Heart right ventricle (tissue), 16 donors: ENCODE measurements at regions of chr10 and their contacts with region 1.

Region 1: GRCh38 chr10:94076321-94076841 is 82.7 kb downstream of the PLCE1 start:
- DNase-seq: peak in 1 of 2 donors; percentile 15
- ATAC-seq: peak; percentile 65 to 91 (median 80)
- H3K4me3 ChIP-seq: peak overlapping the region in 1 of 10 donors; percentile 25
- H3K27ac ChIP-seq: peak overlapping the region in 5 of 10 donors; percentile 49 to 66 (median 52)
- H3K4me1 ChIP-seq: peaks cover 6 to 26% (median 19%) of the 10 kb centered on the region in 9 donors
- H3K27me3 ChIP-seq: no peaks in the 10 kb centered on the region
- CTCF ChIP-seq: peak in 8 of 9 donors; percentile 32 to 66 (median 50)

Region 2: DNA sequence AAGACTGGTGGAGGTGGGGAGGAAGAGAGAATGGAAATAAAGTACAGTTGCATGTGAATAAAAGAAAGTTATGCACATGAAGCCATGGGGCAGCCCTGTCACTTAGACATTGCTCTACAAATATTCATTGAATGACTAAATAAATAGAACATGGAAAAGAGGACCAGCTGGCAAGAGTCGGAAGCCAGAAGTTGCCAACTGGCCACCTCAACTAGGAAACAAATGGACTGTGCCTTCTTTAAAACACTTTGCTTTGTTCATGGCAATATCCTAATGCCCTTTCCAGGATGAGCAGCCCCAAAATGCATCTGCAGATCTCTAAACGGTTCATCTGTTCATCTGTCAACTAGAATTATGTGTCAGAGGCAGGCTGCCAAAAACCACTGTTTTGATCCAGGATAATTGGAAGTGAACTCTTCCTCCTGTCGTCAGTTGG is 129.0 kb after region 1 on chr10:
- intact Hi-C with region 1: no loop called
- DNase-seq: peak in 1 of 2 donors; percentile 30
- ATAC-seq: no peak
- H3K4me3 ChIP-seq: no peak overlapping the region
- H3K27ac ChIP-seq: no peak overlapping the region
- H3K4me1 ChIP-seq: peaks cover 1 to 35% (median 22%) of the 10 kb centered on the region in 9 donors
- H3K27me3 ChIP-seq: no peaks in the 10 kb centered on the region
- CTCF ChIP-seq: no peak

Region 3: DNA sequence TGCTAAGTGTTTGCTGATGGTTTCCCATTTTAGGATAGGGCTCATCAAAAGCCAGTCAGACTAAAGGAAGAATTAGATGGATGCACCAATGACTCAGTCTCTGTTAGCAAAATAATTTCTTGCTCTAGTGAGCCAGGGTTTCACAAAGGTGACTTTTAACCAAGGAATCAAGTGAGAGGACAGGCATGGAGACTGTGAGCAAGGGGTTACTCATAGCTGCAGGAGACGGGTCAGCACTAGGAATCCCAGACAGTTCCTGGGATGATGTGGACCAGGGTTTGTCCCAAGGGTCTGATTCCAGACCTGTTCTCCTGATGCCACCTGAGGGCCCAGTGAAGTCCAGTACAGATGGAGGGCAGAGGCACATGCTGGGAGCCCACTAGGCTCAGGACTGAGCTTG is 148.3 kb after region 1 on chr10:
- intact Hi-C with region 1: loop called in 1 of 10 experiments (anchors 5 kb)
- DNase-seq: no peak
- ATAC-seq: peak in 1 of 8 donors; percentile 45
- H3K4me3 ChIP-seq: no peak overlapping the region
- H3K27ac ChIP-seq: peak overlapping the region in 5 of 10 donors; percentile 8 to 71 (median 33)
- H3K4me1 ChIP-seq: peaks cover 0 to 50% (median 9%) of the 10 kb centered on the region in 9 donors
- H3K27me3 ChIP-seq: no peaks in the 10 kb centered on the region
- CTCF ChIP-seq: no peak

Region 4: DNA sequence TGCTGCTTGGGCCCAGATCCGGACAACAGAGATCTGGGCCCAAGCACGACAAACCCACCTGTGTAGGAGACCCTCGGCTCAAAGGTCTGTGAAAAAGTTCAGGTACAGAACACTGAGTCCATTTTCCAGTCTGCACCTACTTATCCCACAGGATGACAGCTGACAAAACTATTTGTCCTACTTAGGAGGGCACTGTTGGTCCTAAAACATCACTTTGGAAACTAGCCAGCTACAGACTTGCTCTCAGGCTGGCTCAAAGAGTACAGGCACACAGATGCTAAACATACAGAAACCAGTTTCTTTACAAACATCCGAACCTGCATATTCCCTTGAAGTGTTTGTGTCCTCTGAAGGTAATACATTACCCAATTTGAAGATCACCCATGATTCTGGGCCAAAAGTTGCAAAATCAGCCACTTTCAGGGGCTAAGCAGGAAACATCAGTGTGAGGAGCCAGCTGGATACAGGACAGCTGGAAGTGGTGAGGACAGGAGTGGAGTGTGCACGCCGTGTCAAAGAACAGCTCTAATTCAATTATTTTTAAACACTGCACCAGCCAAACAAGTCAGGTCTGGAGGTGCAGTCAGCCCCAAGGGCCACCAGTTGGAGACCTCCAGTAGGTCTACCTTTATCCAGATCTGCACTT is 197.9 kb after region 1 on chr10:
- intact Hi-C with region 1: loop called in 1 of 10 experiments (anchors 5 kb)
- DNase-seq: peak; percentile 33 to 53
- ATAC-seq: peak; percentile 82 to 96 (median 90)
- H3K4me3 ChIP-seq: no peak overlapping the region
- H3K27ac ChIP-seq: peak overlapping the region; percentile 2 to 86 (median 70)
- H3K4me1 ChIP-seq: peaks cover 9 to 31% (median 23%) of the 10 kb centered on the region in 9 donors
- H3K27me3 ChIP-seq: no peaks in the 10 kb centered on the region
- CTCF ChIP-seq: no peak

Region 5: DNA sequence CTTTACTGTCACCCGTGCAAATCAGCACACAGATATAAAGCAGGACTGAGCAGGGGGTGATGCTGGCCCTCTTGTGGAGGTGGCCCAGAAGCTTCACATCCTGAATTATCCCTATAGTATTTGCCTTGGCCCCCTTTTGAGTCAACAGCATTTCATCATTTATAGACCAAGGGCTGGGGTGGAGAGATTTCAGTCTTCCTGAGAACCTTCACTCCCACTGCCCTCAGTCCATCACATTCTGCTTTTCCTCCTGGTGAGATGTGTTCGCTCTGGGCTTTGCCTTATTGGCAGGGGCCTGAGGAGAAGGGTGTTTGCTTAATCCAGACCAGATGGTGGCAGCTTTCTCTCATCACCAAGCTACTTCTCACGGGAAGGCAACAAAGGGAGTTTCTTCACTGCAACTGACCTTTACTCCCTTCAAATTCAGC is 238.7 kb after region 1 on chr10:
- intact Hi-C with region 1: loop called in 7 of 10 experiments (anchors 2 to 10 kb)
- DNase-seq: no peak
- ATAC-seq: peak in 3 of 8 donors; percentile 12 to 34 (median 20)
- H3K4me3 ChIP-seq: no peak overlapping the region
- H3K27ac ChIP-seq: peak overlapping the region in 4 of 10 donors; percentile 15 to 35 (median 24)
- H3K4me1 ChIP-seq: peaks cover 0 to 24% (median 0%) of the 10 kb centered on the region in 9 donors
- H3K27me3 ChIP-seq: no peaks in the 10 kb centered on the region
- CTCF ChIP-seq: no peak

Region 6: DNA sequence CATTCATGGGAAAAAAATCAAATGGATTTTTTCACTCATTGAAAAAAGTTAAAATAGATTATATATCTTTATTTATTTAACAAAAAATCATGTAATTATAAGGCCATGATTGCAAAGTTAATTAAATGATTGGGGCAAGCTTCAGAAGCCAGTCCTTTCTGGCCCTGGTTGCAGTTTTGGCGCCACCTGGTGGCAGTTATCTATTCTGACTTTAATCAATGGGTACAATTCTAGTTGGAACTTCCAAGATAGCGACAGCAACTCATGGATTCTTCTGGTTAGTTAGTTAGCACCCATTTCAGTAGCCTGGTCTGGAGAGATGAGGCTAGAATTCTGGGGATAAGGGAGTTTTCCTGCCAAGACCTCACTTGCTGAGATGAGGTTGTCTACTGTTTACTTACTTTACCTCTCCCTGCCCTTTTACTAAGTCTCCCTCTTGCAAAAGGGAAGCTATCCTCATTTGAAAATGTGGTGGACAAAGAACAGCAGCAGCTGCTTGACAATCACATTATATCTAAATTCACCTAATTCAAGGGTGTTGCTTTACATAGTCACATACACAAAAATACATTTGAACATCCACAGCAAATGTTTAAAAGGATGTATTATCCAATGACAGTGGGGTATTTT is 244.0 kb after region 1 on chr10:
- intact Hi-C with region 1: loop called in 7 of 10 experiments (anchors 2 to 10 kb)
- DNase-seq: peak; percentile 48 to 69
- ATAC-seq: peak in 3 of 8 donors; percentile 43 to 59 (median 47)
- H3K4me3 ChIP-seq: no peak overlapping the region
- H3K27ac ChIP-seq: no peak overlapping the region
- H3K4me1 ChIP-seq: peaks cover 0 to 17% (median 0%) of the 10 kb centered on the region in 9 donors
- H3K27me3 ChIP-seq: no peaks in the 10 kb centered on the region
- CTCF ChIP-seq: peak; percentile 83 to 93 (median 86)

Region 7: DNA sequence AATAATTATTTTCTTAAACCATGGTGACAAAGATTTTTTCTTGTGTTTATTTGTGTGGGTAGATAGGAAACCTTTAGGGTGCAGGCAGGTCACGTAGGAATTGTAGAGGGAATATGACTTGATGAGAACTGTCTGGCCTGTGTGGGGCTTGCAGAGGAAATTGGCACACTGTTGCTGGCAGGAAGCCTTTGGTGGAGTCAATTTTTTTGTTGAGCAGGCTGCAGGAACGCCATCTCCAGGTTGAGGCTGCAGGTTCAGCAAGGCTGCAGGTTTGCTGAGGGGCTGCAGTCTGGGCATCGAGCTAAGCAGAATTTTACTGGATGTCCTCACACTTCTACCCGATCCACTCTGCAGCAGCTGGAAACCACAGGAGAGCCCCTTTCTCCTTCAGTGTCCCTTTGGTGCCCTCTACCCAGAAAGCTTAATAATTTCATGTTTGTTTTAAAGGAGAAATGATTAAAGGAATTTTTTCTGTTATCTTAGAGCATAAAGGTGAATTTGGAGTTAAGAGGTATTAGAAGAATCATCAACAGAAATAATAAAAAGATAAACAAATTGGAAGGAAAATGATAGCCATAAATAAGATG is 363.0 kb after region 1 on chr10:
- intact Hi-C with region 1: loop called in 1 of 10 experiments (anchors 10 kb)
- DNase-seq: no peak
- ATAC-seq: peak in 5 of 8 donors; percentile 27 to 65 (median 55)
- H3K4me3 ChIP-seq: no peak overlapping the region
- H3K27ac ChIP-seq: no peak overlapping the region
- H3K4me1 ChIP-seq: peaks cover 0 to 29% (median 8%) of the 10 kb centered on the region in 9 donors
- H3K27me3 ChIP-seq: no peaks in the 10 kb centered on the region
- CTCF ChIP-seq: peak in 1 of 9 donors; percentile 9